Left colon (tissue), 2 donors: ENCODE measurements at regions of chr12 and their contacts with region 1.

Region 1: DNA sequence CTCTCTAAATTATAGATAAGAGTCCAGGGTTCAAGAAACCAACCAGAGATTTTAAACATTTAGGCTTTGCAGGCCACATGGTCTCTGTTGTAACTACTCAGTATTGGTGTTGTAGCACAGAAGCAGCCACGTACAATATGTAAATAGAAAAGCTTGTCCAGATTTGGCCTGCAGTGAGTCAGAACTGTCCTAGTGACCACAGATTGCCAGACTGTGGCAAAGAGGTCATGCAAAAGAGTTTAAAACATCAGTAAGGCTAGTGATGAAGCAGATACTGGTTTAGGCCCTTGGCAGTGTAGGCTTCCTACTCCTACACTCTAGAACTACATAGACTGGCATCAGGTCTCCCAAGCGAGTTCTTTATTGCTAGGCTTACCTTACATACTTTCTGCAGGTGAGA is 117.6 kb upstream of the GARIN6 start:
- DNase-seq: no peak
- ATAC-seq: no peak

Region 2: GRCh38 chr12:99600388-99600787 is 70.4 kb after region 1 on chr12:
- intact Hi-C with region 1: loop called in 1 of 2 experiments (anchors 5 kb)
- DNase-seq: no peak
- ATAC-seq: no peak

Region 3: GRCh38 chr12:99852666-99853065 is 322.7 kb after region 1 on chr12:
- intact Hi-C with region 1: no loop called
- DNase-seq: no peak
- ATAC-seq: no peak